Mammary epithelial cell (primary cell): ENCODE measurements at regions of chr15 and their contacts with region 1.

Region 1: DNA sequence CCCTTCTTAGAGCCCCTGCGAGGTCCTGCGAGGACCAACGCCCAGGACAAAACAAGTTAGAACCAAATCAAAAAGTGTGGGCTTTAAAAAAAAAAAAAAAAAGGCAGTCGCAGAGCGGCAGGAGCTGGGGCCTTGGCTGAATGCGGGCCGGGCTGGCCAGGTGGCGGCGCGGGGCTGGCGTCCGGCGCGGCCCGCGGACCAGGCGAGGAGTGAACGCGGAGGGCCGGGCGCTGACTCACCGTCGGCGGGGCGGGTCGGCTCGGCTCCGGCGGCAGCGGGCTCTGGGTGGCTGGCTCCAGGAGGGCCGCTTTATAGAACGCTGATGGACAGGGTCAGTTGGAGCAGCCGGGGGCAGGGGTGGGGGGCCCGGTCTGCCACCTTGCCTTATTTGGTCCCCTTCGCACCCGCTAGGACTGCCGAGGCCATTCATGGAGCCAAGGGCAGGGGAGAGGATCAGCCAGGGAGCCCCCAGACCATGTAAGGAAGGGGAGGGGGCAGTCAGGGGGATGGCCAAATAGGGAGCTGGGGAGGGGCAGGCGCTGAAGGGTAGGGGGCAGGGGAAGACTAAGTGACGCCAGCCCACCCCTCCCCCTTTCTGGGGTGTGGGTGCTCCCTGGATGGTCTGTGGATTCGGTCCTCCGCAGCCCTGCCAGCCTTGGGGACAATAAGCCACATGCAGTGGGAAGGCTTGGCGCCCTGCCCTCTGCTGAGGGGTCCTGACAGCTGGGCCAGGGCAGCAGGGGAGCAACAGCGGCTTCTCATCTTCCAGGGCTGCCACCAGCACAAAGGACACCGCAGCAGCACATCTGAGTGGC is at the start of gene ACTC1:
- DNase-seq: peak; percentile 50
- H3K4me3 ChIP-seq: peak within 1 kb of the TSS in 1 of 3 experiments; percentile 32
- H3K27ac ChIP-seq: no peak within 1 kb of the TSS
- H3K4me1 ChIP-seq: peaks cover 7% of the 10 kb centered on the region
- H3K27me3 ChIP-seq: peaks cover 13% of the 10 kb centered on the region
- CTCF ChIP-seq: peak in 1 of 2 donors; percentile 11
- total RNA-seq, gene ACTC1: not detected

Region 2: GRCh38 chr15:34501131-34501530 is 294.3 kb before region 1 on chr15:
- CTCF ChIA-PET with region 1: no interaction called
- dilution Hi-C with region 1: no loop called
- in situ Hi-C with region 1: no loop called
- intact Hi-C with region 1: no loop called
- DNase-seq: no peak
- H3K4me3 ChIP-seq: no peak overlapping the region
- H3K27ac ChIP-seq: no peak overlapping the region
- H3K4me1 ChIP-seq: no peaks in the 10 kb centered on the region
- H3K27me3 ChIP-seq: peaks cover 10% of the 10 kb centered on the region
- CTCF ChIP-seq: no peak

Region 3: GRCh38 chr15:34847612-34848011 is 52.1 kb after region 1 on chr15:
- CTCF ChIA-PET with region 1: no interaction called
- dilution Hi-C with region 1: loop called (anchors 5 kb)
- in situ Hi-C with region 1: no loop called
- intact Hi-C with region 1: loop called (anchors 10 kb)
- DNase-seq: no peak
- H3K4me3 ChIP-seq: no peak overlapping the region
- H3K27ac ChIP-seq: no peak overlapping the region
- H3K4me1 ChIP-seq: no peaks in the 10 kb centered on the region
- H3K27me3 ChIP-seq: no peaks in the 10 kb centered on the region
- CTCF ChIP-seq: no peak

Region 4: GRCh38 chr15:34855397-34855796 is 59.9 kb after region 1 on chr15:
- CTCF ChIA-PET with region 1: no interaction called
- dilution Hi-C with region 1: no loop called
- in situ Hi-C with region 1: no loop called
- intact Hi-C with region 1: loop called (anchors 10 kb)
- DNase-seq: peak; percentile 56
- H3K4me3 ChIP-seq: no peak overlapping the region
- H3K27ac ChIP-seq: no peak overlapping the region
- H3K4me1 ChIP-seq: peaks cover 12% of the 10 kb centered on the region
- H3K27me3 ChIP-seq: no peaks in the 10 kb centered on the region
- CTCF ChIP-seq: no peak

Region 5: DNA sequence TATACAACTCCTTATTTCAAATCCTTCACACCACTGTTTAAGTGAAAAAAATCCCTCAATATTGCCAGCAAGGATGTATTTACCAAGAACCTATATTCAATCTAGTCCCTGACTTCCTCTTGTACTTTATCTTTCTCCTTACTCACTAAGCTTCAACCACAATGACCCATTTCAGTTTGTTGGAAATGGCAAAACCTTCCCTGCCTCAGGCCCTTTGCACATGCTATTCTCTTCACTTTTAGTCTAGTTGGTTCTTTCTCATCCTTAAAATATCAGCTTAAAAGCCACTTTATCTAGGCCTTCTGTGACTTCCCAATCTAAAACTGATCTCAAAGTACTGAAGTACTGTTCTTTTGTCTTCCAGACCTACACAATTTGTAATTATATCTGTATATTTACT is 81.2 kb after region 1 on chr15:
- CTCF ChIA-PET with region 1: no interaction called
- dilution Hi-C with region 1: no loop called
- in situ Hi-C with region 1: no loop called
- intact Hi-C with region 1: no loop called
- DNase-seq: no peak
- H3K4me3 ChIP-seq: no peak overlapping the region
- H3K27ac ChIP-seq: no peak overlapping the region
- H3K4me1 ChIP-seq: no peaks in the 10 kb centered on the region
- H3K27me3 ChIP-seq: no peaks in the 10 kb centered on the region
- CTCF ChIP-seq: no peak